Caco-2 (cell line): ENCODE measurements at regions of chr10 and their contacts with region 1.

Region 1: DNA sequence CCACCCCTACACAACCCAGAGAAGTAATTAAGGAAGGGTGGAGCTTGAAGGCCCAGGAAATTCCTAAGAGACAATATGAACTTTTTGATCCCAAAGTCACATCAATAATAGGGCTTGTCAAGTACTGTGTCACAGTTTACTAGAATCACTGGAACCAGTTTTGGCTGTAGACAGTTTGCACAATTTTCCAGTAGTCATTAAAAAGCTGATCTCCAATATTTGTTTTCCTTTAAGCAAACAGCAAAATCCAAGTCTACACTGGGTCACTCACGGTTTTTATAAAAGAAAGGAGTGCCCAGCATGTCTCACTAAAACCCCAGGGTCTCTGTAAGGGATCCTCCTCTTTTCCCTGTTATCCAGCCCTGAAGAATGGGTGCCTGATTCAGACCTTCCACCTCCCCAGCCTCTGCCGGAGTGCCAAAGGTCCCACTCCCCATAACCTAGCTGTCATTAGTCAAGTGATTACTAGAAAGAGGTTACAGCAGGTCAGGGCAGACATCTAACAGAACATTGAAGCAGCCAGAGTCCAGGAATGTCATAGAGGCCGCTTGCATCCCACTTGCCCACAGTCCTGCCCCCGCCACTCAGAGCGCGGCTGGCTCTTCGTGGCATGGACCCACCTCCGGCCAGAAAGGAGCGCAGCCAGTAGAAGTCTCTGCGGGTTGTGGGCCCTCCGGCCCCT is 556 bp downstream of the SLC25A16 start:
- DNase-seq: no peak
- H3K4me3 ChIP-seq: peak overlapping the region; percentile 62
- H3K4me3 Mint-ChIP-seq: peak overlapping the region; percentile 84
- H3K27ac Mint-ChIP-seq: peak overlapping the region; percentile 89
- H3K4me1 ChIP-seq: peaks cover 9% of the 10 kb centered on the region
- H3K4me1 Mint-ChIP-seq: peaks cover 5% of the 10 kb centered on the region
- H3K27me3 ChIP-seq: no peaks in the 10 kb centered on the region
- H3K27me3 Mint-ChIP-seq: no peaks in the 10 kb centered on the region
- CTCF ChIP-seq: no peak

Region 2: DNA sequence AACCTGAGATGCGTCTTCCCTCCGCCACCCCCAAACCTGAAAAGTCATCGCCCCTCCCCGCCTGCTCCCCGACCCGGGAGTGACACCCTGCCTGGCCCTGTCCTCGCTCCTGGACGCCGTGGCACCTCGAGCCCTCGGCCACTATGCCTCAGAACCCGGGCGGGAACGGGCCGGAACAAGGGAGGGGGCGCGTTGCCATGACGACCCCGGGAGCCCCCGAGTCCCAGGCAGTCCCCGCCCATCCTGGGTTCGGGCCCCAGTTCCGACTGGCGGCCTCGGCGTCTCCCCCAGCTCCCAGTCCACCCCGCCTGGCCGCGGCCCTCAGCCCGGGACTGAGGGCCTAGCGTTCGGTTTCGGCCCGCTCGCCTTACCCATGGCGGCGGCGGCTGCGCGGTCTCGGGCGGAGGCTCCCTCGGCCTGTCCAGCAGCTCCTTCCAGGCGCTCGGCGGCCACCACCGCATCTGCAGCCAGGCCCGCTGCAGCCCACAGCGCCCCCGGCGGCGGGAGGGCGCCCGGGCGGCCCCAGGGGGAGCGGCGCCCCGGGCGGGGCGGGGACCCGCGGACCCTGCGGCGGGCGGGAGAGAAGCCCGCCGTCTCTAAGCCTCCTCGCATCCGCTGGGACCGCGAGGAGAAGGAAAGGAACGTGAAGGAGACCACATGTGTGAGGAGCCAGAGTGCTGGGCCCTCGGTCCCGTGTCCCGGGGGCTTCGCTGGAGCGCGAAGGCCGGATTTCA is 119.8 kb before region 1 on chr10 and contains the start of gene RUFY2:
- CTCF ChIA-PET with region 1: no interaction called
- POLR2A ChIA-PET with region 1: interaction called, 3 read pairs
- intact Hi-C with region 1: loop called (anchors 2 kb)
- DNase-seq: peak; percentile 89 to 98
- H3K4me3 ChIP-seq: peak within 1 kb of the TSS; percentile 99
- H3K4me3 Mint-ChIP-seq: peak within 1 kb of the TSS; percentile 95
- H3K27ac Mint-ChIP-seq: peak within 1 kb of the TSS; percentile 97
- H3K4me1 ChIP-seq: peaks cover 7% of the 10 kb centered on the region; the same call in 1 of the 2 replicates
- H3K4me1 Mint-ChIP-seq: peaks cover 16% of the 10 kb centered on the region
- H3K27me3 ChIP-seq: no peaks in the 10 kb centered on the region
- H3K27me3 Mint-ChIP-seq: no peaks in the 10 kb centered on the region
- CTCF ChIP-seq: peak; percentile 63 to 81
- total RNA-seq, gene RUFY2: 42.4 and 44.0 TPM in 2 replicates

Region 3: DNA sequence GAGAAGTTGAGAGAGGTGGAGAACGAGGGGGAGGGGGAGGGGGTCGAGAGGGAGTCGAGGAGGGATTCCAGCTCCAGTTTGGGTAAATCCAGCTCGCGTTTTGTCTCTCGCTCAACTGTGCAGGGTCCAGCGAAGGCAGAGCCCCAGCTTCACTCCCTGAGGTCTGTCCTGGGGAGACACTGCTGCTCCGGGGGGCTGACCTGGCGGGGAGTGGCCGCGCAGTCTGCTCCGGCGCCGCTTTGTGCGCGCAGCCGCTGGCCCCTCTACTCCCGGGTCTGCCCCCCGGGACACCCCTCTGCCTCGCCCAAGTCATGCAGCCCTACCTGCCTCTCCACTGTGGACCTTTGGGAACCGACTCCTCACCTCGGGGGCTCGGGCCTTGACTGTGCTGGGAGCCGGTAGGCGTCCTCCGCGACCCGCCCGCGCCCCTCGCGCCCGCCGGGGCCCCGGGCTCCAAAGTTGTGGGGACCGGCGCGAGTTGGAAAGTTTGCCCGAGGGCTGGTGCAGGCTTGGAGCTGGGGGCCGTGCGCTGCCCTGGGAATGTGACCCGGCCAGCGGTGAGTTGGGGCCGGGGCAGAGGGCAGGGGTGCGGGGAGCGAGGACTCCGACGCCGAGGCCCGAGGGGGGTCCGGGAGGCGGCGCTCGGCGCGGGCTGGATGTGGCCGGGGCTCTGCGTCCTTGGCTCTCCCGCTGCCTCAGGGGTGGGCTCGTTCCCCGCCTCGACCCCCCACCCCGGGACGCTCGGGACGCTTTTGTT is 33.6 kb after region 1 on chr10 and contains the start of gene TET1:
- CTCF ChIA-PET with region 1: interaction called, 8 read pairs
- POLR2A ChIA-PET with region 1: interaction called, 3 read pairs
- intact Hi-C with region 1: loop called (anchors 1 kb)
- DNase-seq: peak; percentile 88 to 91
- H3K4me3 ChIP-seq: peak within 1 kb of the TSS; percentile 93
- H3K4me3 Mint-ChIP-seq: peak within 1 kb of the TSS; percentile 76
- H3K27ac Mint-ChIP-seq: peak within 1 kb of the TSS; percentile 3
- H3K4me1 ChIP-seq: peaks cover 10% of the 10 kb centered on the region; the same call in 1 of the 2 replicates
- H3K4me1 Mint-ChIP-seq: peaks cover 16% of the 10 kb centered on the region
- H3K27me3 ChIP-seq: no peaks in the 10 kb centered on the region
- H3K27me3 Mint-ChIP-seq: no peaks in the 10 kb centered on the region
- CTCF ChIP-seq: no peak
- total RNA-seq, gene TET1: 18.6 and 19.1 TPM in 2 replicates

Region 4: GRCh38 chr10:69092959-69093850 is 566.4 kb after region 1 on chr10:
- CTCF ChIA-PET with region 1: no interaction called
- POLR2A ChIA-PET with region 1: no interaction called
- intact Hi-C with region 1: no loop called
- DNase-seq: peak; percentile 88 to 91
- H3K4me3 ChIP-seq: no peak overlapping the region
- H3K4me3 Mint-ChIP-seq: no peak overlapping the region
- H3K27ac Mint-ChIP-seq: no peak overlapping the region
- H3K4me1 ChIP-seq: no peaks in the 10 kb centered on the region
- H3K4me1 Mint-ChIP-seq: peaks cover 7% of the 10 kb centered on the region
- H3K27me3 ChIP-seq: no peaks in the 10 kb centered on the region
- H3K27me3 Mint-ChIP-seq: peaks cover 11% of the 10 kb centered on the region
- CTCF ChIP-seq: peak; percentile 93 to 98